Activated CD4-positive, alpha-beta memory T cell treated with anti-CD3 and anti-CD28 coated beads for 36 hours (primary cell): ENCODE measurements at regions of chr17 and their contacts with region 1.

Region 1: DNA sequence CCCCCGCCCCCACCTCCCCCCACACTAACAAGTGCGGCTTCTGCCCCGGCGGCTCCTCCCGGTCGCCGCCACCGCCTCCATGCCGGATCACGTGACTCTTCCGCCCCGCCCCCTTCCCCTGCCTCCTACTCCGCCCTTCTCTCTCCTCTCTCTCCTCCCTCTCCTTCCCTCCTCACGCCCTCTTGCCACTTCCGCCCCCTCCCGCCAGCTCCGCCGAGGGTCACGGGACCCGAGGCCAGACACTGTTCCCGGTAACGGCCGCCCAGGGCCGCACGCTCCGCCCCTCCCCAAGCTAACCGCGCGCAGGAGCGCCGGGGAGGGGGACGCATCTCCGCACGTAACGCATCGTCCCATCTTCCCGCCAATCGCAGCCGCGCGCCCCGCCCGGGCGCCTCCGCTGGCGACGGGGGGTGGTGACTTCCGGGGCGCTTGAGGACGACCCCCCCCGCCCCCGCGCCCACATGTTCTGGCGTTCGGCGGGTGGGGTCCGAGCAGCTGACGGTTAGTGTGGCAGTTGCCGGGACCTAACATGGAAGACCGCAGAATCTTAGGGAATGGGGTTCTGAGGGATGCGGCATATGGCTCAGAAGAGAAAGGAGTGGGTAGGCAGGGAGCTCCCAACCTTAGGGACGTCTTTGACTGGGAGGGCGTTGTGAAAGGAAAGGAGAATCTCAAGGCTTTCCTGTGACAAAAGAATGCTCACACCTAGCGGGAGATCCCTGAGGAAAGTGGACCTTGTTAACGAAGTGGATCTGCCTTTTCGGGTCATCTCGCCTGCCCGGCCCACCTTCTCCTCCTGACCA is at the start of gene USP32:
- DNase-seq: peak; percentile 100
- H3K4me3 Mint-ChIP-seq: peak within 1 kb of the TSS; percentile 93
- H3K27ac Mint-ChIP-seq: peak within 1 kb of the TSS; percentile 97
- H3K4me1 Mint-ChIP-seq: peaks cover 42% of the 10 kb centered on the region
- H3K27me3 Mint-ChIP-seq: no peaks in the 10 kb centered on the region
- total RNA-seq, gene USP32: 34.4 to 35.8 TPM

Region 2: GRCh38 chr17:60355663-60356594 is 36.3 kb before region 1 on chr17:
- CTCF ChIA-PET with region 1: interaction called, 4 read pairs
- POLR2A ChIA-PET with region 1: interaction called, 9 read pairs
- intact Hi-C with region 1: loop called (anchors 1 kb)
- DNase-seq: no peak
- H3K4me3 Mint-ChIP-seq: no peak overlapping the region
- H3K27ac Mint-ChIP-seq: peak overlapping the region; percentile 81
- H3K4me1 Mint-ChIP-seq: peaks cover 47% of the 10 kb centered on the region
- H3K27me3 Mint-ChIP-seq: no peaks in the 10 kb centered on the region

Region 3: GRCh38 chr17:60372790-60373483 is 19.3 kb before region 1 on chr17:
- CTCF ChIA-PET with region 1: no interaction called
- POLR2A ChIA-PET with region 1: interaction called, 13 read pairs
- intact Hi-C with region 1: no loop called
- DNase-seq: no peak
- H3K4me3 Mint-ChIP-seq: no peak overlapping the region
- H3K27ac Mint-ChIP-seq: no peak overlapping the region
- H3K4me1 Mint-ChIP-seq: peaks cover 10% of the 10 kb centered on the region
- H3K27me3 Mint-ChIP-seq: no peaks in the 10 kb centered on the region

Region 4: DNA sequence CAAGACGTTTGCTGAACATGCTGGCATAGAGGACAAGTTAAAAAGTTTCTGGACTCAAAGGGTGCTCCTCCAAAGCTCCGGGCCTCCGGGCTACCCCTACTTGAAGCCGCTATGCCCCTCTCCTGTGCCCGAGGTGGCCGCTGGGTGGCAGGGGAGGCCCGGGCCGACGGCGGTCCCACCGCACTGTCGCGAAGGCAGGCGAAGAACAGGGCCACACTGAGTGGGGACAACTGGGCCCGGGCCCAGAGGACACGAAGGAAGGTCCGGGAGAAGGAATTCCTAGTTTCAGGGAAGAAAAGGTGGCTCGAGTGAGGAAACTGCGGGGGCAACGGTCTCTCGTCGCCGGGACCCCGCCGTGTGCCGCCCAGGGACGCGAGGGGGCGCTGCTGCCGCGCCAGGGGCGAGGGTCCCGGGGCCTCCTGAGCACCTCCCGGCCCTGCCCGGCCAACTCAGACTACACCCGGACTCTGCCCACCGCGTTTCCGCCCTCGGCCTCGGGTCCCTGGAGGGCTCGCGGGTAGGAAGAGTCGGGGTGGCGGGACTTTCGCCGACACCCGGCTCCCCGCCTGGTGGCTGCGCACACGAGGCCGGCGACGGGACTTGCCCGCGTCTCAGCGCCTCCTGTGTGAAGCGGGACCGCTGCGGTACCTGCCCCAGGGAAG is 29.2 kb after region 1 on chr17:
- CTCF ChIA-PET with region 1: interaction called, 10 read pairs
- POLR2A ChIA-PET with region 1: no interaction called
- intact Hi-C with region 1: no loop called
- DNase-seq: peak; percentile 86
- H3K4me3 Mint-ChIP-seq: peak overlapping the region; percentile 64
- H3K27ac Mint-ChIP-seq: no peak overlapping the region
- H3K4me1 Mint-ChIP-seq: peaks cover 8% of the 10 kb centered on the region
- H3K27me3 Mint-ChIP-seq: peaks cover 2% of the 10 kb centered on the region

Region 5: GRCh38 chr17:60599620-60600489 is 207.6 kb after region 1 on chr17 and contains the start of gene PPM1D:
- CTCF ChIA-PET with region 1: no interaction called
- POLR2A ChIA-PET with region 1: interaction called, 7 read pairs
- intact Hi-C with region 1: loop called (anchors 1 kb)
- DNase-seq: peak; percentile 99
- H3K4me3 Mint-ChIP-seq: peak within 1 kb of the TSS; percentile 94
- H3K27ac Mint-ChIP-seq: peak within 1 kb of the TSS; percentile 89
- H3K4me1 Mint-ChIP-seq: peaks cover 35% of the 10 kb centered on the region
- H3K27me3 Mint-ChIP-seq: no peaks in the 10 kb centered on the region
- total RNA-seq, gene PPM1D: 9.4 to 10.9 TPM

Region 6: DNA sequence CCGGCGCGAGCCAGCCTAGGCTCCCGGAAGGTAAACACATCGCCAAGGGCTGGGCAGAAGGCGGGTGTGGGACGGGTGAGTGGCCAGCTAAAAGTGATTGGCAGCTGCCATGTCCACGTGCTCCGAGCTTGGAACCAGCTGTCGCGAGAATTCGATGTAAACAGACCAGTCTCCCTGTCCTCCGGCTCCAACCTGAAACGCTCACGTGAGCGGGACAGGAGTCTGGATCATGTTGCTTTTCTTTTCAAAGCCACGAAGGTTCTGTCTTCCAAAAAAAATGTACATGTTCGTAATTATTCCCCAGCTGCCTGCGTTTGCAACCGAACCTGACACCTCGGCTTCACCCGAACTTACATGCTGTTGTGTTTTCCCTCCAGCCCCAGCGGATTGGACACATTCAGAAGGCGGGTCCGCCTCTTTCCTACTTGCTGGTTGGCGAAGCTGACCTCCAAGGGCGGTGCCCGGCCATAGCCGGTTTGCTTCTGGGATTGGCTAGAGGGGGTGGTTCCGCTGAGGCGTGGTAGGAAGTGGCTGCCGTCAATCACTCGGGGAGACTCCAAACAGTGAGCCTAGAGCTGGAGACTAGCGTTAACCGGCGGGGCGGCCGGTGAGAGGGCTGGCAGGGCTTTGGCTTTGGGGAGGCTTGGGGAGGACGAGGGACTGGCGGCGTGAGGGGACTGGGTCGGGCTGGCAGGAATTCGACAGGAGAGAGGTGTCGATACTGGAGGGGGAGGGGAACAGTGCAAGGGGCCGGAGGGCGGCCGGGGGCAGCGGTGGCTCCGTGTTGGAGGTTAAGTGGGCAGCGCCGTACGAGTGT is 285.3 kb after region 1 on chr17 and contains the start of gene BCAS3:
- CTCF ChIA-PET with region 1: no interaction called
- POLR2A ChIA-PET with region 1: no interaction called
- intact Hi-C with region 1: loop called (anchors 5 kb)
- DNase-seq: peak; percentile 99
- H3K4me3 Mint-ChIP-seq: peak within 1 kb of the TSS; percentile 90
- H3K27ac Mint-ChIP-seq: peak within 1 kb of the TSS; percentile 59
- H3K4me1 Mint-ChIP-seq: peaks cover 19% of the 10 kb centered on the region
- H3K27me3 Mint-ChIP-seq: no peaks in the 10 kb centered on the region
- total RNA-seq, gene BCAS3: 6.8 to 7.1 TPM